Cardiac septum (tissue), 1 donor: ENCODE measurements at regions of chr20 and their contacts with region 1.

Region 1: DNA sequence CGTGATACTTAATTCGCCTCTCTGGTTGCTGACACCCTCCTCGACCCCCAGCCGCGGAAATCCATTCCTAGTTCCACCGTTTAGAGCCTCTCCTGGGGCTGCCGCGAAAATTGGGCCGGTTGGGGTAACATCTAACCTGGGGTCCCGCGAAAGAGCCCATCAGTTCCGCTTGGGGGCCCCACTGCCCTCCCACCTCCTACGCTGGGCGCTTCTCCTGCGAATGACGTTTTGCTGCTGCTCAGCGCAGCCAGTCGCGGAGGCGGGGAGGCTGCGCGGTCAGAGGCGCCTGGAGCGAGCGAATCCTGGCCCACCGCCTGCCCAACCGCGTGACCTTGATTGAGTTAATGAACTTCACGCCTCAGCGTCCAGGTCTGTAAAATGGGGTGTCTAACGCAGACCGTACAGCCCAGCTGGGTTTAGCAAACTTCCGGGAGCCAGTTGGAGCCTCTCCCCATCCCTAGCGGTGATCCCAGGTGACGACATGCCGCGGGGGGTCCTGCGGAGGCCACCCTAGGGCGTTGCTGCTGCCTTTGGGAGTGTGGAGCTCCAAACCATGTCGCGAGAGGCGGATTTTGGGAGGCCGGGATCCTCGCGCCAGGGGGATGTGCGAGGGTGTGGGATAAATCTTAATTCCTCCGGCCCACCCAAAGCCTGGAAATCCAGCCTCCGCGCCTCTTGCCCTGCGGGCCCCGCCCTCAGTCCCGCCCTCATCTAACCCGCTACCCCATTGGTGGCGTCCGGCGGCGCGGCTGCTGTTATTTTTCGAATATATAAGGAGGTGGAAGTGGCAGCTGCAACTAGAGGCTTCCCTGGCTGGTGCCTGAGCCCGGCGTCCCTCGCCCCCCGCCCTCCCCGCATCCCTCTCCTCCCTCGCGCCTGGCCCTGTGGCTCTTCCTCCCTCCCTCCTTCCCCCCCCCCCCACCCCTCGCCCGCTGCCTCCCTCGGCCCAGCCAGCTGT is at the start of gene CDC25B:
- DNase-seq: peak; percentile 97
- total RNA-seq, gene CDC25B: 9.4 TPM

Region 2: GRCh38 chr20:3811467-3812258 is 15.9 kb after region 1 on chr20:
- intact Hi-C with region 1: loop called (anchors 2 kb)
- DNase-seq: peak; percentile 98

Region 3: DNA sequence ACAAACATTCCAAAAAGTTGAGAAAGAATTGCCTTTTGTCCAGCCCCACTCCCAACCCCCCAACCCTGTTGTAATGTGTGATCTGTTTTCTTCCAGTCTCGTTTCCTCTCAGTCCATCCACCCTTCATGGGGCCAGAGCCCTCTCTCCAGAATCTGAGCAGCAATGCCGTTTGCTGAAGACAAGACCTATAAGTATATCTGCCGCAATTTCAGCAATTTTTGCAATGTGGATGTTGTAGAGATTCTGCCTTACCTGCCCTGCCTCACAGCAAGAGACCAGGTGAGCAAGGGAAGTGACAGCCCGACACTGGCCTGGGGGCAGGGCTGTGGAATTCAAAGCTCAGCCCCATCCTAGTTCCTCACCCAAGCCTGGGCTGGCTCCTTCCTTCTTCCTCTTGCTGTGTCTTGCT is 58.7 kb after region 1 on chr20:
- intact Hi-C with region 1: loop called (anchors 2 kb)
- DNase-seq: no peak